WTC11 (cell line): ENCODE measurements at regions of chr2 and their contacts with region 1.

Region 1: GRCh38 chr2:27370026-27370815 is at the starts of genes EIF2B4 and SNX17:
- DNase-seq: peak; percentile 99
- ATAC-seq: peak; percentile 91
- H3K4me3 Mint-ChIP-seq: peak within 1 kb of the TSS; percentile 97
- H3K27ac Mint-ChIP-seq: peak within 1 kb of the TSS; percentile 96
- H3K4me1 Mint-ChIP-seq: peaks cover 20% of the 10 kb centered on the region
- H3K27me3 Mint-ChIP-seq: no peaks in the 10 kb centered on the region
- CTCF ChIP-seq: no peak
- total RNA-seq, gene EIF2B4: 46.6 to 53.6 TPM (median 49.1 TPM) in 3 replicates
- total RNA-seq, gene SNX17: 72.5 to 75.3 TPM (median 74.7 TPM) in 3 replicates

Region 2: DNA sequence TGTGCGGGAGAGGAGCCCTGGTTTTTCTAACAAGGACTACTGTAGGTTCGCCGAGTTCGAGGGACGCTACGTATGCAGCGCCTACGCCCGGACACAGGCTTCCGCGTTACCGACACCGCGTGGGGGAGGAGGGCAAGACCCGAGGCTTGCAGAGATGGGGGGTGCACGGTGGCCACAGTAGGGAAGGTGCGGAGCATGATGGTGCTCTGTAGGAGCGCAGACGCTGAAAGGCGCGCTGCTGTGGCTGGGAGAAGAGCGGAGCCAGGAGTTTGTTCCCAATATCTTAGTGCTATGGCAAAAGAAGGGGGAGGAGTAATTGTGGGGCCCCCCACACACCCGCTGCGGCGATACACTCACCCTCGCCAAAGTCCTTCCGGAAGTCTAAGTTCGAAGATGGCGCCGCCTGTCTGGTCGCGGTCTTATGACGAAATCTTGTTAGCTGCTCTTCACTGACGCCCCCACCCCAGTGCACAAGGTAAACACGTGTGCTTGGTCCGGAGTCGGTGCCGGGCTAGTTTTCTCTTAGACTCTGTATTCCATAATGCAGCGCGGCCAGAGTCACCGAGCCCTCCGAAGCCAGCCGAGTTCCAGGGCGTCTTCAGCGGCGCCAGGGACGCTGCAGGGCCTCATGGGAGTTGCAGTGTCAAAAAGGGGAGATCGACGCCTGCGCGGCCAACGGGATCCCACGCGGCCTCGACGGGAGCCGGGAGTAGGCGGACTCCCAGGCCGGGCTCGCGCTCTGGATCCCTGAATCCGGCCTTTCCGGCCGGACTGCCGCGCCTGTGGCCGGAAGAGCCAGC is 13.6 kb before region 1 on chr2 and contains the start of gene GTF3C2:
- CTCF ChIA-PET with region 1: interaction called, 14 read pairs
- POLR2A ChIA-PET with region 1: interaction called, 13 read pairs
- DNase-seq: peak; percentile 95
- ATAC-seq: peak; percentile 91
- H3K4me3 Mint-ChIP-seq: peak within 1 kb of the TSS; percentile 93
- H3K27ac Mint-ChIP-seq: peak within 1 kb of the TSS; percentile 100
- H3K4me1 Mint-ChIP-seq: peaks cover 41% of the 10 kb centered on the region
- H3K27me3 Mint-ChIP-seq: no peaks in the 10 kb centered on the region
- CTCF ChIP-seq: no peak
- total RNA-seq, gene GTF3C2: 103 to 123 TPM (median 107 TPM) in 3 replicates

Region 3: GRCh38 chr2:27380626-27381545 is 10.7 kb after region 1 on chr2 and contains the start of gene ZNF513:
- CTCF ChIA-PET with region 1: interaction called, 15 read pairs
- POLR2A ChIA-PET with region 1: interaction called, 9 read pairs
- DNase-seq: peak; percentile 96
- ATAC-seq: peak; percentile 89
- H3K4me3 Mint-ChIP-seq: peak within 1 kb of the TSS; percentile 94
- H3K27ac Mint-ChIP-seq: peak within 1 kb of the TSS; percentile 100
- H3K4me1 Mint-ChIP-seq: peaks cover 20% of the 10 kb centered on the region
- H3K27me3 Mint-ChIP-seq: no peaks in the 10 kb centered on the region; the same call in 1 of the 2 replicates
- CTCF ChIP-seq: no peak
- total RNA-seq, gene ZNF513: 23.6 to 27.4 TPM (median 24.5 TPM) in 3 replicates

Region 4: GRCh38 chr2:27409321-27410073 is 39.3 kb after region 1 on chr2 and contains the start of gene PPM1G:
- CTCF ChIA-PET with region 1: no interaction called
- POLR2A ChIA-PET with region 1: no interaction called
- DNase-seq: peak; percentile 98
- ATAC-seq: peak; percentile 92
- H3K4me3 Mint-ChIP-seq: peak within 1 kb of the TSS; percentile 84
- H3K27ac Mint-ChIP-seq: peak within 1 kb of the TSS; percentile 97
- H3K4me1 Mint-ChIP-seq: peaks cover 18% of the 10 kb centered on the region
- H3K27me3 Mint-ChIP-seq: peaks cover 13% of the 10 kb centered on the region
- CTCF ChIP-seq: no peak
- total RNA-seq, gene PPM1G: 140 to 193 TPM (median 147 TPM) in 3 replicates

Region 5: GRCh38 chr2:27471961-27472360 is 101.7 kb after region 1 on chr2:
- CTCF ChIA-PET with region 1: no interaction called
- POLR2A ChIA-PET with region 1: no interaction called
- DNase-seq: no peak
- ATAC-seq: no peak
- H3K4me3 Mint-ChIP-seq: no peak overlapping the region
- H3K27ac Mint-ChIP-seq: peak overlapping the region; percentile 58; the same call in 1 of the 2 replicates
- H3K4me1 Mint-ChIP-seq: no peaks in the 10 kb centered on the region
- H3K27me3 Mint-ChIP-seq: no peaks in the 10 kb centered on the region
- CTCF ChIP-seq: no peak